ENCODE measurements at regions of chr12 and their contacts with region 1.

Region 1: DNA sequence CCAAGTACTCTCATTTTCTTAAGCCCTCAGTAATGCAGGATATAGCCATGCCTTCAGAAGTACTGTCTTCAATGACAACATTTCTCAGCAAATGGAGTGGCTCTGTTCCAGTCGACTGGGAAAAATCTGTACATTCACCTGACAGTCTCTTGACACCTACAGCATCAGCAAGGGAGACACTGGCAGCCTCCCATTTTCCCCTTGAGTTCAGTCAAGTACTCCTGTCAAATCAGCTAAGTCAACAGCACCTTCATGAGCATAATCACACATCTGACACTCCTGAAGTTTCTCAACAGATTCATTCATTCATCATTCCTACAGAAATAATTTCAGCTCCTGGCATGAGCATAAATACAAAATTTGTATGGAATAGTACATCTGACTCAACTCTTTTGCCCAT is 46.1 kb downstream of the INTS13 start:
- DNase-seq: no peak
- H3K4me3 ChIP-seq: no peak overlapping the region
- H3K27ac ChIP-seq: no peak overlapping the region
- H3K4me1 ChIP-seq: no peaks in the 10 kb centered on the region
- H3K27me3 ChIP-seq: no peaks in the 10 kb centered on the region

Region 2: DNA sequence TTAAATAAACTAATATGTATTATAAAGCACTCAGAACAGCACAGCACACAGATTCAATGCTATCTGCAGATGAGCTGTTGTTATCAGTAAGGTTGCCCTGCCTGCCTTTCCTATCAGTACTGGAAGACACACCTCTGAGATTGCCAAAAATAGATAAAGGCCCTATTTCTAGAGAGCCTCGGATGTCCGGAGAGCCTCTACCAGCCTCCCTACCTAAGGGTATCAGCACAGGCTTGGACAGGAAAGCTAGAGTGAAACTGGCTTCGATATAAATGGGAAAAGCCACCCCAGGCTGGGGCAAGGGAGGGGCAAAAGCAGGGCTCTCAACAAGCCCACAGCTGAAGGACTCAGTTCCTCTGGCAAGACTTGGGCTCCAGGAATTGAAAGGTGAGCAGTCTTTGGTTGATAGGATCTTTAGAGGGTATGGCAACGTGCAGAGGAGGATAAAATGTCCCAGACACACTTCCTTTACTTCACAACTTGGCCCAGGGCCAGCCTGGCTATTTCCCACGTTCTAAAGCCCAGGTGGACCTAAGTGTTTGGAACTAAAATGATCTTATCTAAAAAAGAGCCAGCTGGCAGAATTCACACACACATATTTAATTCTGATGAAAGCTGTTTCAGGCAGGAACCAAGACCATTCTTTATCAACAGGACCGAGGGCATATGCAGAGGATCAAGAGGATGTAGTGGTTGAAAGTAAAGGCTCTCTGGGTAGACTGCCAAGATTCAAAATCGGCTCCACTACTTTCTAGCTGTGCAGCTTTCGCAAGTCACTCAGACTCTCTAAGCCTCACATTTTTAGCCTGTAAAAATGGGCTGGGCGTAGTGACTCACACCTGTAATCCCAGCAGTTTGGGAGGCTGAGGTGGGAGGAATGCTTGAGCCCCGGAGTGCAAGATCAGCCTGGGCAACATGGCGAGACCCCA is 20.9 kb before region 1 on chr12:
- CTCF ChIA-PET with region 1: interaction called, 71 read pairs
- POLR2A ChIA-PET with region 1: no interaction called
- DNase-seq: peak; percentile 50 to 91 (median 87)
- H3K4me3 ChIP-seq: peak overlapping the region in 4 of 7 experiments; percentile 3 to 53 (median 12)
- H3K27ac ChIP-seq: peak overlapping the region; percentile 8 to 60
- H3K4me1 ChIP-seq: peaks cover 12 to 54% (median 38%) of the 10 kb centered on the region in 4 experiments
- H3K27me3 ChIP-seq: no peaks in the 10 kb centered on the region

Region 3: GRCh38 chr12:26953447-26953846 is 61.7 kb after region 1 on chr12:
- CTCF ChIA-PET with region 1: no interaction called
- POLR2A ChIA-PET with region 1: no interaction called
- DNase-seq: peak in 2 of 3 donors; percentile 37 to 54
- H3K4me3 ChIP-seq: peak overlapping the region in 2 of 7 experiments; percentile 1 to 23
- H3K27ac ChIP-seq: peak overlapping the region in 1 of 2 experiments; percentile 61
- H3K4me1 ChIP-seq: peaks cover 5 to 26% (median 12%) of the 10 kb centered on the region in 4 experiments
- H3K27me3 ChIP-seq: no peaks in the 10 kb centered on the region